PC-3 (cell line): ENCODE measurements at regions of chr1 and their contacts with region 1.

Region 1: GRCh38 chr1:29245876-29246275 is 9.6 kb downstream of the PTPRU start:
- DNase-seq: peak; percentile 75
- ATAC-seq: peak; percentile 95
- H3K4me3 ChIP-seq: no peak overlapping the region
- H3K27ac ChIP-seq: no peak overlapping the region
- H3K4me1 ChIP-seq: peaks cover 16% of the 10 kb centered on the region
- H3K27me3 ChIP-seq: no peaks in the 10 kb centered on the region
- CTCF ChIP-seq: peak; percentile 79

Region 2: GRCh38 chr1:29120961-29121485 is 124.9 kb before region 1 on chr1:
- CTCF ChIA-PET with region 1: no interaction called
- POLR2A ChIA-PET with region 1: no interaction called
- intact Hi-C with region 1: no loop called
- DNase-seq: no peak
- ATAC-seq: no peak
- H3K4me3 ChIP-seq: no peak overlapping the region
- H3K27ac ChIP-seq: no peak overlapping the region
- H3K4me1 ChIP-seq: peaks cover 18% of the 10 kb centered on the region
- H3K27me3 ChIP-seq: no peaks in the 10 kb centered on the region
- CTCF ChIP-seq: no peak

Region 3: GRCh38 chr1:29305943-29306342 is 60.1 kb after region 1 on chr1:
- CTCF ChIA-PET with region 1: interaction called, 7 read pairs
- POLR2A ChIA-PET with region 1: no interaction called
- intact Hi-C with region 1: loop called (anchors 2 kb)
- DNase-seq: no peak
- ATAC-seq: no peak
- H3K4me3 ChIP-seq: no peak overlapping the region
- H3K27ac ChIP-seq: no peak overlapping the region
- H3K4me1 ChIP-seq: 0 out of 2 replicates have a peak, but pooled peaks cover 3% of the 10 kb centered on the region
- H3K27me3 ChIP-seq: no peaks in the 10 kb centered on the region
- CTCF ChIP-seq: no peak

Region 4: DNA sequence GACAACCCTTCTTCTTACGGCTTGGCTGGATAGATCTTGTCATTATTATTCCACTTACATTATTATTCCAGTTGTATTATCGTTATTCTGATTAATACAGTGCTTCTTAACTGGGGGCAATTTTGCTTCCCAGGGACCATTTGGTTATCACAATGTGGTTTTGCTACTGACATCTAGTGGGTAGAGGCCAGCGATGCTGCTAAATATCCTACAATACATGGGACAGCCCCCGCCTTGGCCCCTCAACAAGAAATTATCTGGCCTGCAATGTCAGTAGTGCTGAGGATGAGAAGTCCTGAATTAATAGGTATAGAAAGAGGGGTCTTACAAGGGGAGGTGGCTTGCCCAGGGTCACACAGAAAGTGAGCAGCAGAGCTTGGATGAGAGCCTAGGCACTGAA is 96.1 kb after region 1 on chr1:
- CTCF ChIA-PET with region 1: interaction called, 4 read pairs
- POLR2A ChIA-PET with region 1: no interaction called
- intact Hi-C with region 1: loop called (anchors 1 kb)
- DNase-seq: peak; percentile 17
- ATAC-seq: 0 out of 2 replicates have a peak, but pooled peaks have one; percentile 29
- H3K4me3 ChIP-seq: no peak overlapping the region
- H3K27ac ChIP-seq: no peak overlapping the region
- H3K4me1 ChIP-seq: no peaks in the 10 kb centered on the region
- H3K27me3 ChIP-seq: peaks cover 30% of the 10 kb centered on the region; the same call in 1 of the 2 replicates
- CTCF ChIP-seq: peak; percentile 51

Region 5: GRCh38 chr1:29396438-29397255 is 150.8 kb after region 1 on chr1:
- CTCF ChIA-PET with region 1: interaction called, 3 read pairs
- POLR2A ChIA-PET with region 1: no interaction called
- intact Hi-C with region 1: loop called (anchors 1 kb)
- DNase-seq: peak; percentile 19
- ATAC-seq: no peak
- H3K4me3 ChIP-seq: no peak overlapping the region
- H3K27ac ChIP-seq: no peak overlapping the region
- H3K4me1 ChIP-seq: no peaks in the 10 kb centered on the region
- H3K27me3 ChIP-seq: no peaks in the 10 kb centered on the region
- CTCF ChIP-seq: peak; percentile 50